ENCODE measurements at regions of chrX and their contacts with region 1.

Region 1: GRCh38 chrX:65985922-65986588 is 53.8 kb downstream of the VSIG4 start:
- DNase-seq: peak; percentile 70
- H3K4me3 Mint-ChIP-seq: no peak overlapping the region
- H3K27ac Mint-ChIP-seq: no peak overlapping the region
- H3K4me1 Mint-ChIP-seq: peaks cover 6% of the 10 kb centered on the region
- H3K27me3 Mint-ChIP-seq: no peaks in the 10 kb centered on the region
- CTCF ChIP-seq: peak; percentile 44

Region 2: GRCh38 chrX:65581661-65582339 is 404.3 kb before region 1 on chrX:
- CTCF ChIA-PET with region 1: interaction called, 17 read pairs
- POLR2A ChIA-PET with region 1: no interaction called
- intact Hi-C with region 1: loop called (anchors 1 kb)
- DNase-seq: peak; percentile 72
- H3K4me3 Mint-ChIP-seq: no peak overlapping the region
- H3K27ac Mint-ChIP-seq: no peak overlapping the region
- H3K4me1 Mint-ChIP-seq: peaks cover 5% of the 10 kb centered on the region
- H3K27me3 Mint-ChIP-seq: no peaks in the 10 kb centered on the region
- CTCF ChIP-seq: peak; percentile 60

Region 3: DNA sequence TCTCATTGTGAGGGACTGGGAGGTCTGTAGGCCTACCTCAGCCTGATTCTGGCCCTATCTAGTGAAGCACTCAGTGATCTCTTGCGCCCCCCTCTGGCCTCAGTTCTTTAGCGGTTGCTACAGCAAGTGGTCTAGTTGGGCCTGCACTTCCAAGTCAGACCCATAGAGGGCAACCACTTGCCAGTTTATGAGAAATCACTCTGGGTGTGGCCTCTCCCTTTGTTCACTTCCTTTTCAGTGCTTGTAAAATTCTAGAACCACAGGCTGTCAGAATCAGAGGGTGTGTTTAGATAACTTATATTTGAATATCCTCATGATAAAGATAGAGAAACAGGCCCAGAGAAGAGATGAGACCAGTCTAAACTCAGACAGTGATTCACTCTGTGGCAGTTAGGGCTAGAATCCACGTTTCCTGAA is 390.6 kb before region 1 on chrX:
- CTCF ChIA-PET with region 1: interaction called, 6 read pairs
- POLR2A ChIA-PET with region 1: no interaction called
- intact Hi-C with region 1: loop called (anchors 1 kb)
- DNase-seq: peak; percentile 92
- H3K4me3 Mint-ChIP-seq: no peak overlapping the region
- H3K27ac Mint-ChIP-seq: no peak overlapping the region
- H3K4me1 Mint-ChIP-seq: peaks cover 13% of the 10 kb centered on the region
- H3K27me3 Mint-ChIP-seq: no peaks in the 10 kb centered on the region
- CTCF ChIP-seq: peak; percentile 96

Region 4: GRCh38 chrX:65706041-65706828 is 279.8 kb before region 1 on chrX:
- CTCF ChIA-PET with region 1: interaction called, 4 read pairs
- POLR2A ChIA-PET with region 1: no interaction called
- intact Hi-C with region 1: loop called (anchors 1 kb)
- DNase-seq: peak; percentile 90
- H3K4me3 Mint-ChIP-seq: no peak overlapping the region
- H3K27ac Mint-ChIP-seq: peak overlapping the region; percentile 82
- H3K4me1 Mint-ChIP-seq: peaks cover 36% of the 10 kb centered on the region
- H3K27me3 Mint-ChIP-seq: no peaks in the 10 kb centered on the region
- CTCF ChIP-seq: no peak

Region 5: DNA sequence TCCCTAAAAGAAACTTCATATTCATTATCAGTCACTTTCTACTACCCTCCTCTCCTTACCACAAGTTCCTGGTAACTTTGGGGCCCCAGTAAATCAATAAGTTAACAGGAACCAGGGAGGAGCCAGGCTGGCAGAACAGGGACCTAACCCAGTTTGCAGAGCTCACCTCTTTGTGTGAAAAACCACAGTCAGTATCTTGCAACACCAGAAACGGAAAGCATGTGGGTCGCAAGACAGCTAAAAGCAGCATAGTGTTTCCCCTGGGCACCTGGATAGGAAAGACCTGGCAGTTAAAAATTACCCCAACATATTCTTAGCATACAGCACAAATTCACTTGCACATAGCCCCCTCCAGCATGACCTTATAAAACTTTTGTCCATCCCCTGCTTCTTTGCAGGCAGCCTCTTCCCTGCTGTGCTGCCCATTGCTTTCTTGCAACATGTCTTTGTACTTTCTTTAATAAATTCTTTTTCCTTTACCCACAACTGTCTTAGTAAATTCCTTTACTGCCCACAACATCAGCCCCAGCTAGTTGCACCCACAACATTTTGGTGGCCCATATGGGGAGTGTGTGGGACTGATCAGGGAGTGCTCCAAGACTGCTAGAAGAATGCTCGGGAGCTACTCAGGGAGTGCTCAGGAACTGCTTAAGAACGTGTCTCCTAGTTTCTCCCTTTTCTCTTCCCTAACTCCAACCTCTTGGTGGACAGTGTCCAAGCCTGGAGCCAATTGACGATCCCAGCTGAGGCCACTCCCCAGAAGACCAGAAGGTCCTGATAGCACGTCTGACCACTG is 235.2 kb before region 1 on chrX:
- CTCF ChIA-PET with region 1: interaction called, 17 read pairs
- POLR2A ChIA-PET with region 1: interaction called, 7 read pairs
- intact Hi-C with region 1: loop called (anchors 1 kb)
- DNase-seq: no peak
- H3K4me3 Mint-ChIP-seq: no peak overlapping the region
- H3K27ac Mint-ChIP-seq: no peak overlapping the region
- H3K4me1 Mint-ChIP-seq: peaks cover 18% of the 10 kb centered on the region
- H3K27me3 Mint-ChIP-seq: no peaks in the 10 kb centered on the region
- CTCF ChIP-seq: no peak

Region 6: DNA sequence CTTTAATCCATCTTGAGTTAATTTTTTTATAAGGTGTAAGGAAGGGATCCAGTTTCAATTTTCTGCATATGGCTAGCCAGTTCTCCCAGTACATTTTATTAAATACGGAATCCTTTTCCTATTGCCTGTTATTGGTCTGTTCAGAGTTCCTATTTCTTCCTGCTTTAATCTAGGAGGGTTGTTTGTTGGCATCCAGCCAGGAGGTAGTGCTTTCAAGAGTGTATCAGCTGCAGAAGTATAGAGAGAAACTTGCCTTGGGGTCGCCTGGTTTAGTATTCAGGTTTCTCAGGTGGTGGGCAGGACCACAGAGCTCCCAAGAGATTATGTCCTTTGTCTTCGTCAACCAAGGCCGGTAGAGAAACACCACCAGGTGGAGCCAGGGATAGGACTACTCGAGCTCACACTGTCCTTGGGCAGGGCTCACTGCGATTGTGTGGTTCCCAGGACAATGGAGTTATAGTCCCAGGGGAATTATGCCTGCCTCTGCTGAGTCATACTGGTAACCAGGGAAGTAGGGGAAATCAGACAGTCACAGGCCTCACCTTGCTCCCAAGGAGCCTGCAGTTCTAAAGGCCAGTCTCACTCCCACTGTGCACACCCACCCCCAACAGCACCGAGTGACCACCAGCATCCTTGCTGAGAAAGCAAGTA is 114.3 kb before region 1 on chrX:
- CTCF ChIA-PET with region 1: no interaction called
- POLR2A ChIA-PET with region 1: no interaction called
- intact Hi-C with region 1: loop called (anchors 1 kb)
- DNase-seq: peak; percentile 84
- H3K4me3 Mint-ChIP-seq: no peak overlapping the region
- H3K27ac Mint-ChIP-seq: no peak overlapping the region
- H3K4me1 Mint-ChIP-seq: peaks cover 10% of the 10 kb centered on the region
- H3K27me3 Mint-ChIP-seq: no peaks in the 10 kb centered on the region
- CTCF ChIP-seq: peak; percentile 16

Region 7: GRCh38 chrX:65997978-65998717 is 12.1 kb after region 1 on chrX:
- CTCF ChIA-PET with region 1: interaction called, 11 read pairs
- POLR2A ChIA-PET with region 1: no interaction called
- intact Hi-C with region 1: no loop called
- DNase-seq: no peak
- H3K4me3 Mint-ChIP-seq: no peak overlapping the region
- H3K27ac Mint-ChIP-seq: no peak overlapping the region
- H3K4me1 Mint-ChIP-seq: no peaks in the 10 kb centered on the region
- H3K27me3 Mint-ChIP-seq: no peaks in the 10 kb centered on the region
- CTCF ChIP-seq: no peak

Measured in MCF 10A (cell line).